ENCODE measurements at regions of chr7 and their contacts with region 1.

Region 1: DNA sequence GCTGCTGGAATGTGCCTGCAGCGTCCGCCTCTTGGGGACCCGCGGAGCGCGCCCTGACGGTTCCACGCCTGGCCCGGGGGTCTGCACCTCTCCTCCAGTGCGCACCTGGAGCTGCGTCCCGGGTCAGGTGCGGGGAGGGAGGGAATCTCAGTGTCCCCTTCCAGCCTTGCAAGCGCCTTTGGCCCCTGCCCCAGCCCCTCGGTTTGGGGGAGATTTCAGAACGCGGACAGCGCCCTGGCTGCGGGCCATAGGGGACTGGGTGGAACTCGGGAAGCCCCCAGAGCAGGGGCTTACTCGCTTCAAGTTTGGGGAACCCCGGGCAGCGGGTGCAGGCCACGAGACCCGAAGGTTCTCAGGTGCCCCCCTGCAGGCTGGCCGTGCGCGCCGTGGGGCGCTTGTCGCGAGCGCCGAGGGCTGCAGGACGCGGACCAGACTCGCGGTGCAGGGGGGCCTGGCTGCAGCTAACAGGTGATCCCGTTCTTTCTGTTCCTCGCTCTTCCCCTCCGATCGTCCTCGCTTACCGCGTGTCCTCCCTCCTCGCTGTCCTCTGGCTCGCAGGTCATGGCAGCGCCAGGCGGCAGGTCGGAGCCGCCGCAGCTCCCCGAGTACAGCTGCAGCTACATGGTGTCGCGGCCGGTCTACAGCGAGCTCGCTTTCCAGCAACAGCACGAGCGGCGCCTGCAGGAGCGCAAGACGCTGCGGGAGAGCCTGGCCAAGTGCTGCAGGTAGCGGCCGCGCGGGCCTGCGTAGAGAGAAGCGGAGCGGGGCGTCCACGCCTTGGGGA is 645 bp downstream of the SLC26A4 start:
- DNase-seq: peak; percentile 77
- ATAC-seq: peak; percentile 43
- H3K4me3 Mint-ChIP-seq: peak overlapping the region; percentile 78
- H3K27ac Mint-ChIP-seq: peak overlapping the region; percentile 82
- H3K4me1 Mint-ChIP-seq: peaks cover 31% of the 10 kb centered on the region
- H3K27me3 Mint-ChIP-seq: peaks cover 21% of the 10 kb centered on the region

Region 2: DNA sequence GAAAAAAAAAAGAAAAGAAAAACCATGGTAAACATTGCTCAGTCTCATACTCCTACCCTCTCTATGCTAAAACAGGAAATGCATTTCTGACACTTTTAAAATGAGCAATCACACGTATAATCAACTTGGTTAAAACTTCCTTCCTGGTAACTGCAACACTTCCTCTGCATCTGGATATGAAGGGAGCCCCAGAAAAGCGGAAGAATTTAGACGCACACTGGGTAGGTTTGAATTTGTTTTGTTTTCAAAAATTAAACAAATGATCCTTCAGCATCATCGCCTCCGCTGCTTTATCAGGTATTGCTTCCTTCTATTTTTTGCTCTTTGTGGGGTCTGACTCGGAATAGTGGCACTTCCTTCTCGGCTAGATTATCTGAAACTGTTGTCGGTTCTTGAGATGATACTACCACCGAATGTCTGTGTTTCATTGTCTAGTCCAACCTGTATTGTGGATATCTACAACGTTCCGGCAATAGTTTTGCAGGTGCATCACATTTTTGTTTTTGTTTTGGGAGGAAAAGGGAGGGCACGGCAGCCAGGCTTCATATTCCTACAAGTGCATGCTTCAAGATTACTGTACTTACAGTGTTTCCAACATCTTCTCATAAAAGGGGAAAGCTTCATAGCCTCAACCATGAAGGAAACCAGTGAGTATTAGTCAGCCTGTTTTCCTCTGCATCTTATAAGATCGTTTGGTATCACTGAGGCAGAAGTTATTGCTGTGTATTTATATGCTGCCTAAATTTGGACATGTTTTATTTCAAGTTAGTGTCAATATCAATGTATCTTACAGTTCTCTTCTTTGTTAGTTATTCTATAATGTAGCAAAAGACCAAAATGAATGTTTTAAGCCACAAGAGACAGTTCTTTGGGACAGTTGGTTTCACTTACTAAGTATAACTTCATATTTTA is 795.9 kb before region 1 on chr7 and contains the start of gene PIK3CG:
- CTCF ChIA-PET with region 1: no interaction called
- POLR2A ChIA-PET with region 1: no interaction called
- intact Hi-C with region 1: loop called in 1 of 2 experiments (anchors 5 kb)
- DNase-seq: no peak
- ATAC-seq: peak; percentile 79
- H3K4me3 Mint-ChIP-seq: peak within 1 kb of the TSS; percentile 83
- H3K27ac Mint-ChIP-seq: peak within 1 kb of the TSS; percentile 92
- H3K4me1 Mint-ChIP-seq: peaks cover 75% of the 10 kb centered on the region
- H3K27me3 Mint-ChIP-seq: no peaks in the 10 kb centered on the region
- total RNA-seq, gene PIK3CG: 9.9 to 14.3 TPM

Region 3: DNA sequence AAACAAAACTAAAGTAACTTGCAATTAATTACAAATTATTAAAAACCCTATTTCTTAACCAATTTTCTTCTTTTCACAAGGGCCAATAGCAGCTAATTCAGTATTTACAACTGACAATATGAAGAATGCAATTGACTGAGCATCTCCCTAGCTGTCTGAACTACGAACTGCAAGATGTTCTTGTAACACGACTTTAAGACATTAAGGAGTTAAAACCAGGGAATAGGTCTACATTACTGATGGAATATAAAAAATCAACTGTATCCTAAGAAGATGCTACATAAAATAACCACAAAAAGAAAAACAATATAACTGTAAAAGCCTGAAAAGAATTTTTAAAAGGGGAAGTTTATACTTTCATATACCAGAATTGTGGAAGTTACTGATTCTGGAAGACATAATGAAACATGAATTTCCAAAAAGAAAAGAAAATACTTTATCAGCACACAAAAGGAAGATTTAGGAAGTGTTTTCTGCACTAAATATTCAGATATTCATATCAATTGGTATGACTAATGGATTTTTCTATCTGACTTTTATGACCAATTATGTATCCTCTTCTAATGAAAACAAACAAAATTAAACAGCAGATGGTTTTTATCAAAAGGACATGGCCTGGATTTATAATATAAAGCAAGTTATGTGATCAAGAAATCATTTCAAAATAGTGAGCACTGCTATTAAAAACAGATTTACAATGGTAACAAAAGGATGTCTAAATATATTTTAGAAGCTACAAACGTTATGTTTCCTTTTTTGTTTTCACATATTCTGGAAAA is 189.8 kb before region 1 on chr7:
- CTCF ChIA-PET with region 1: no interaction called
- POLR2A ChIA-PET with region 1: no interaction called
- intact Hi-C with region 1: loop called in 1 of 2 experiments (anchors 10 kb)
- DNase-seq: no peak
- ATAC-seq: no peak
- H3K4me3 Mint-ChIP-seq: no peak overlapping the region
- H3K27ac Mint-ChIP-seq: no peak overlapping the region
- H3K4me1 Mint-ChIP-seq: peaks cover 2% of the 10 kb centered on the region
- H3K27me3 Mint-ChIP-seq: no peaks in the 10 kb centered on the region

Region 4: DNA sequence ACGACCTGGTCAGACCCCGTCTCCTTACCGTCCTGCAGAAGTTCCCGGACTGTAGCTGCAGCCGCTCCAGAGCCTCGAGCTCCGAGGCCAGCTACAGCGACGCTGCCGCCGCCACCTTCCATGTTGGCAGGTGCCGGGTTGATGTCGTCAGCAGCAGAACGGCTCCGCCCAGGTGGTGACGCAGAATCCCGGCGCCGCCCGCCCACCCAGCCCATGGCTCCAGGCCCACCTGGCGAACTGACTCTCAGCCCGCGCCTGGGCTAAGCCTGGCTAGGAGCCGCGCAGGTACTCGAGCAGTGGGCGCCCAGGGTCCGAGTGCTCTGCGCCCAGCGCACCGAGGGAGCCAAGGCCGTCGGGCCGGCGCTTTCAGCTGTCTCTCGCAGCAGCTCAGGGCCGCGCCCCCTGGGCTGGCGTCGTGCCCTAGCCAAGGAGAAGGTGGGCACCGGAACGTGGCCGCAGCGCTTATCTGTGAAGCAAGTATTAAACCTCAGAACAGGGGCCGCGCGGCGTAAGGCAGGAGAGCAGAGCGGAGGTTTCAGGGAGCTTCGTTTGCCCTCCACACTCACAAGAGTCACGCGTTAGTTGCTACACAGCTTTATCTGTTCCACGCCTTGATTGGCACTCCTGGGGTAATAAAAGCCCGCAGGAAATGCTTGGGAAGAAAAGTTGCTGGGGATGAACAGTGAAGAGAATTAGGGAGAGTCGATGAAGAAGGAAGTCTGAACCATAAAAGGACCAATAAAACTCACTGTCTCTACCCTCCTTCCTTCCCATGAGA is 97.3 kb before region 1 on chr7 and contains the starts of genes COG5 and DUS4L:
- CTCF ChIA-PET with region 1: interaction called, 3 read pairs
- POLR2A ChIA-PET with region 1: interaction called, 7 read pairs
- intact Hi-C with region 1: loop called (anchors 1 to 5 kb)
- DNase-seq: peak; percentile 92
- ATAC-seq: peak; percentile 88
- H3K4me3 Mint-ChIP-seq: peak within 1 kb of the TSS; percentile 85
- H3K27ac Mint-ChIP-seq: peak within 1 kb of the TSS; percentile 94
- H3K4me1 Mint-ChIP-seq: peaks cover 62% of the 10 kb centered on the region
- H3K27me3 Mint-ChIP-seq: no peaks in the 10 kb centered on the region
- total RNA-seq, gene COG5: 34.1 to 35.5 TPM
- total RNA-seq, gene DUS4L: 12.8 to 13.3 TPM

Region 5: DNA sequence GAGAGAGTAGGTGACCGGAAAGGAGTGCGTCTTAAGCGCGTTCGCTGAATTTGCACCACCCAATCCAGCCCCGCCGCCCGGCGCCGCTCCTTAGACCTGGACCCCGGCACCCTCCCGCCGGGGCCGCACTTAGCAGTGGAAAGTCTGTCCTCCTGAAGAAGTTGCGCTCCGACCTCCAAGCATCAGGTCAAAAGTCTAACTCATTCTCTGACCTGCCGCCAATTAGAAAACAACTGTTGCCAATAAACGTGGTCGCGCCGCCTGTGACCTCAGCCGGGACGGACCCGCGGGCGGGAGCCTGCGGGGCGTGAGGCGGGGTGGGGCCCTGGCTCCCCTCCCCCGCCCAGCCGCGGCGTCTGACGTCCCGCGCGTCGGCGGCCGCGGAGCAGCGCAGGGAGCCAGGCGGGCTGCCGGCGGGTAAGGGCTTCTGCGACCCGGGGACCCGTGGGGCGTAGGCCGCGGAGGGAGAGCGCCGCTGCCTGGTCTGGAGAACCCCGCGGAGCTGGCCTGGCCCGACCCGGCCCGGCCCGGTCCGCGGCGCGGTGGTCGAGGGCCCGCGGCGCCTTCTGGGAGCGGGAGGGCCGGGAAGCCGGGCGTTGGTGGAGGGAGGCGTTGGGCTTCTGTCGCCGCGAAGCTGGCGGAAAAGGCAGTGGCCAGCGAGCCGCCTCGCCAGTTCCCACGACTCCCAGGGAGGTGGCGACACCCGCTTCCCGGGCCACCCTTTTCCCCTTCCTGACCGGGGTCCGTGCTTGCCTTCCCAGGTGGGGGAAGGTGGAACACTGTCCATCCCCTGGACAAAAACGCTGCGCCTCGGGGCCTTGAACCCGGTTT is 81.2 kb before region 1 on chr7 and contains the start of gene BCAP29:
- CTCF ChIA-PET with region 1: no interaction called
- POLR2A ChIA-PET with region 1: no interaction called
- intact Hi-C with region 1: loop called (anchors 1 to 5 kb)
- DNase-seq: peak; percentile 83
- ATAC-seq: peak; percentile 96
- H3K4me3 Mint-ChIP-seq: peak within 1 kb of the TSS; percentile 84
- H3K27ac Mint-ChIP-seq: peak within 1 kb of the TSS; percentile 88
- H3K4me1 Mint-ChIP-seq: peaks cover 18% of the 10 kb centered on the region
- H3K27me3 Mint-ChIP-seq: no peaks in the 10 kb centered on the region
- total RNA-seq, gene BCAP29: 31.4 to 38.8 TPM

Region 6: GRCh38 chr7:107816011-107816566 is 154.8 kb after region 1 on chr7:
- CTCF ChIA-PET with region 1: no interaction called
- POLR2A ChIA-PET with region 1: no interaction called
- intact Hi-C with region 1: loop called (anchors 1 to 10 kb)
- DNase-seq: no peak
- ATAC-seq: no peak
- H3K4me3 Mint-ChIP-seq: no peak overlapping the region
- H3K27ac Mint-ChIP-seq: peak overlapping the region; percentile 81
- H3K4me1 Mint-ChIP-seq: peaks cover 35% of the 10 kb centered on the region
- H3K27me3 Mint-ChIP-seq: no peaks in the 10 kb centered on the region

Measured in activated CD4-positive, alpha-beta T cell treated with anti-CD3 and anti-CD28 coated beads for 36 hours (primary cell).